ENCODE measurements at regions of chr11 and their contacts with region 1.

Region 1: GRCh38 chr11:465896-466530 is 15.9 kb downstream of the PTDSS2 start:
- DNase-seq: peak; percentile 68 to 69
- H3K4me3 ChIP-seq: no peak overlapping the region
- H3K4me3 Mint-ChIP-seq: peak overlapping the region; percentile 39
- H3K27ac Mint-ChIP-seq: peak overlapping the region; percentile 85
- H3K4me1 ChIP-seq: peaks cover 30% of the 10 kb centered on the region
- H3K4me1 Mint-ChIP-seq: peaks cover 34% of the 10 kb centered on the region
- H3K27me3 ChIP-seq: no peaks in the 10 kb centered on the region
- H3K27me3 Mint-ChIP-seq: no peaks in the 10 kb centered on the region
- CTCF ChIP-seq: no peak

Region 2: DNA sequence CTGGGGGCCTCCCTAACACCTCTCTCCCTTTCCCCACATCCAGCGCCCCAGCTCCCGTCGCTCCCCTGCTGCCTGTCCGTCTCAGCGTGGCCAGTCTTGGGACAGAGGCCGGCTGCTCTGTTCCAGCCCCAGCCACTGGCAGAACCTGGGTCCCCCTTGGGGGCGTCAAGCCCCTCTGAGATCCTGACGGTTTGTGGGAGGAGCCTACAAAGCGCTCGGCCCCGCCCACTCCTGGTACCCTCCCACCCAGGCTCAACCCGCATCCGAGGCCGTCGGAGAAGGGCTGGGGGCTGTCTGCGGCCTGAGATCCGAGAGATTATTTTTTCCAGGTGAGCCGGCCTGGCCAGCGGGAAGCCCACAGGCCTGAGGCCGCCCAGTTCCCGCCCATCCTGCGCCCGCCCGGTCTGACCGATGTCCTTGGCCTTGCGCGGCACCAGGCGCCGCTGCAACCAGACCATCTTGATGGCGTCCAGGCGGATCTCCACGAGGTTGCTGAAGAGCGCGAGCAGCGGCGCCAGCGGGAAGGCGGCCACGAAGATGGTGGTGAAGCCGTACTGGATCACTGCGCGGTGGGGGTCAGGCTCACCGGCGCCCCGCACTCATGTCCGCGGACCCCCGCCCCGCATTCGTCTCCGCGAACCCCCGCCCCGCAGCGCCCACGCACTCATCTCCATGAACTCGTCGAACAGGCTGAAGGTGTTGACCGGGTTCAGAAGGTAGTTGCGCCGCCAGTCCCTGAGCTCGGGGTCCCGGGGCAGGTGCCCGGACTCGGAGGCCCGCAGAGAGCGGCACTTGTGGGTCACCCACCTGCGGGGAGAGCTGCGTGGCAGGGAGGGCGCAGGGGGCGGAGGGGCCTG is 45.7 kb before region 1 on chr11:
- CTCF ChIA-PET with region 1: no interaction called
- POLR2A ChIA-PET with region 1: no interaction called
- intact Hi-C with region 1: no loop called
- DNase-seq: no peak
- H3K4me3 ChIP-seq: no peak overlapping the region
- H3K4me3 Mint-ChIP-seq: no peak overlapping the region
- H3K27ac Mint-ChIP-seq: no peak overlapping the region
- H3K4me1 ChIP-seq: peaks cover 37% of the 10 kb centered on the region
- H3K4me1 Mint-ChIP-seq: peaks cover 13% of the 10 kb centered on the region
- H3K27me3 ChIP-seq: no peaks in the 10 kb centered on the region
- H3K27me3 Mint-ChIP-seq: no peaks in the 10 kb centered on the region
- CTCF ChIP-seq: no peak

Region 3: DNA sequence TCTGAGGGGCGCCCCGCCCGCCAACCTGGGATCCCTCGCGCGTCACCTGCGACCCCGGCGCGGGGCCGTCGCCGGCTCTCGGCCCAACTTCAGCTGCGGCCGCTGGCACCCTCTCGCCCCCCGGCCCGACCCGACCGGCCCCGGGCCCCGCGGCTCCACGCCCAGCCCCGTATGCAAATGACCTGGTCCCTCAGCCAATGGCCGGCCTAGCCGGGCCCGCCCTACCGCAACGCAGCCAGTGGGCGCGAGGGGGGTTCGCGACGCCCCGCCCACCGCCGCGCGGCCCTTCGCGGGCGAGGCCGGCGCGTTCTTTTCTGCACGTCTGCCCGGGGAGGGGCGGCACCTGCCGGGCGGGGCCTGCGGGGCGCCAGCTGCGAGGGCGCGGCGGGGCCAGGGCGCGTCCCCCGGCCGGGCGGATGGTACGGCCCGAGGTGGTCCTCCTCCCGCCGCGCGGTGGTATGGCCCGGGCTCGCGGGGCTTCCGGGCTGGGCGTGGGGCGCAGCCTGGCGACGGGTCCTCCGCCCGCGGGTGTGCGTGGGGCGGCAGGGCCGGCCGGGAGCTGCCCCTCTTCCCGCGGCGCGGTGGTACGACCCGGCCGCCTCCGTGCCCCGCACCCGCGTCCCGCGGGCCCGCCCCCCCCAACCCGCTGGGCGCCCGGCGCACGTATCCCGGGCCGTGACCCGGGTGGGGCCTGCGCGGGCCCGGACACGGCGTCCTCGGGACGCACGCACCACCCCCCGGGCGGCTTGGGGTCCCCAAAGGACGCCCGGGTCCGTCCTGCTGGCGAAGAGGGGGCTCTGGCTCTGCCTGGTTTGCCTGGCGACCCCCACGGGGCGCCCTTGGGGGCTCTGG is 102.5 kb after region 1 on chr11:
- CTCF ChIA-PET with region 1: no interaction called
- POLR2A ChIA-PET with region 1: no interaction called
- intact Hi-C with region 1: no loop called
- DNase-seq: peak; percentile 95 to 99
- H3K4me3 ChIP-seq: peak overlapping the region; percentile 99
- H3K4me3 Mint-ChIP-seq: peak overlapping the region; percentile 74
- H3K27ac Mint-ChIP-seq: no peak overlapping the region
- H3K4me1 ChIP-seq: peaks cover 54% of the 10 kb centered on the region
- H3K4me1 Mint-ChIP-seq: peaks cover 6% of the 10 kb centered on the region
- H3K27me3 ChIP-seq: no peaks in the 10 kb centered on the region
- H3K27me3 Mint-ChIP-seq: no peaks in the 10 kb centered on the region
- CTCF ChIP-seq: no peak

Region 4: DNA sequence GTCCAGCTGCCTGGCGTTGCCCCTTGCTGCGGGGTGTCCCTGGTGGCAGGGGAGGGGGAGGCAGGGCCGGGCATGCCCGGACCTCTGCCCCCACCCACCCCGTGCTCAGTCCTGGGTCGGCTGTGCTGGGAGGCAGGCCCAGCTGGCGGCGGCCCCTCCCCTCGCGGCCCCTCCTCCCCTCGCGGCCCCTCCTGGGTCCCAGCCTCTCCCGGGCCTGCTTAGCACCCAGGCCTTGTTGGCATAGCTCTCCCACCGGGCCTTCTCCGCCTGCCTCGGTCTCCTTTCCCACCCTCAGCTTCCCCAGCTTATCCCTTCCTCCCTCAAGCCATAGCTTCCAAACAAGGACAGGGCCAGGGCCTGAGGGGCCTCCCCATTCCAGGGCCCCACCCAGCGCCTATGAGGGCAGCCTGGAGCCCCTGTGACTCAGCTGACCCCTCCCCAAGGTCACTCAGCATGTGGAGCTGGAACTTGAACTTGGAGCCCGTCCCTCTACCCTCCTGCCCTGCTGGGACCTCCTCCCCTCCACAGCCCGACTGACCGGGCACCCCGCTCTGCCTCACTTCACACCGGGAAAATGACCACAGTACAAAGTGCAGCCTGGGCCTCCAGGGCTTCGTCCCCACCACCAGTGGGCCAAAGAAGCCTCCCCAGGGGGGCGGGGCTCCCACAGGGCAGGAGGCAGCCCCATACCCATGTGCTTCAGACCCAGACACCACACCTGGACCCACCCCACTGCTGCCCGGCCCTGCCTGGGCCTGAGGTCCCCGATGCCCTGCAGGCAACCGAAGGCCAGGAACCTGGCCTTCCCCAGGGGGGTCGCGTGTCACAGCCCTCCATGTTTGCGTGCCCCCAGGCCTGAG is 241.2 kb after region 1 on chr11:
- CTCF ChIA-PET with region 1: no interaction called
- POLR2A ChIA-PET with region 1: interaction called, 13 read pairs
- intact Hi-C with region 1: no loop called
- DNase-seq: peak; percentile 82 to 87
- H3K4me3 ChIP-seq: peak overlapping the region; percentile 80
- H3K4me3 Mint-ChIP-seq: peak overlapping the region; percentile 86
- H3K27ac Mint-ChIP-seq: peak overlapping the region; percentile 90
- H3K4me1 ChIP-seq: peaks cover 56% of the 10 kb centered on the region
- H3K4me1 Mint-ChIP-seq: peaks cover 13% of the 10 kb centered on the region
- H3K27me3 ChIP-seq: no peaks in the 10 kb centered on the region
- H3K27me3 Mint-ChIP-seq: no peaks in the 10 kb centered on the region
- CTCF ChIP-seq: peak in 1 of 2 experiments; percentile 63

Measured in Caco-2 (cell line).